ENCODE measurements at regions of chr14 and their contacts with region 1.

Region 1: GRCh38 chr14:102591889-102592763 is at the start of gene RCOR1:
- DNase-seq: peak; percentile 89
- ATAC-seq: peak; percentile 77
- H3K4me3 ChIP-seq: peak within 1 kb of the TSS; percentile 94 to 97 (median 94)
- H3K27ac ChIP-seq: peak within 1 kb of the TSS; percentile 99
- H3K4me1 ChIP-seq: peaks cover 48% of the 10 kb centered on the region
- H3K27me3 ChIP-seq: no peaks in the 10 kb centered on the region; a peak in 1 of 5 replicates
- CTCF ChIP-seq: no peak
- EP300 ChIP-seq: no peak
- POLR2A ChIP-seq: peak; percentile 85 to 94
- RAD21 ChIP-seq: peak; percentile 58; the same call in 1 of the 2 replicates
- total RNA-seq, gene RCOR1: 11.1 and 14.8 TPM in 2 replicates

Region 2: GRCh38 chr14:100803226-100803625 is 1788.9 kb before region 1 on chr14:
- CTCF ChIA-PET with region 1: no interaction called
- POLR2A ChIA-PET with region 1: no interaction called
- in situ Hi-C with region 1: no loop called
- intact Hi-C with region 1: no loop called
- DNase-seq: no peak
- ATAC-seq: no peak
- H3K4me3 ChIP-seq: no peak overlapping the region
- H3K27ac ChIP-seq: no peak overlapping the region
- H3K4me1 ChIP-seq: peaks cover 6% of the 10 kb centered on the region; the same call in 1 of the 2 replicates
- H3K27me3 ChIP-seq: no peaks in the 10 kb centered on the region
- CTCF ChIP-seq: no peak
- EP300 ChIP-seq: no peak
- POLR2A ChIP-seq: no peak
- RAD21 ChIP-seq: no peak

Region 3: DNA sequence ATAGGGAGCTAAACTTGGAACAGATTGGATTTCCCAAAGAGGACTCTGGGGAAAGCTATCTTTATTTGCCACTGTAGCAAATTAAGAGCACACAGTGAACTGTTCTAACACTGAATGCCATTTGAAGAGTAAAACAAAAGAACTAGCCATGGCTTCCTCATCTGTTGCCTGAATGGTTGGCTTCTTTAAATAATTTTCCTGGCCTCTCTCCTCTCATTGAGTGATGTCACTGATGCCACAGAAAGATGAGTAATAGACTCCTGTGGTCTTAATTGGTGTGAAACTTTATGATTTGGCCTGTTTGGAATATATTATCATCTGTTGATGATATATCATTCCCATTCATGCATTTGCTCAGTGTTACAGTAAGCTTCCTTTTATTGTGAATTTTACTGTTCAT is 409.9 kb before region 1 on chr14:
- CTCF ChIA-PET with region 1: no interaction called
- POLR2A ChIA-PET with region 1: no interaction called
- in situ Hi-C with region 1: no loop called
- intact Hi-C with region 1: no loop called
- DNase-seq: no peak
- ATAC-seq: no peak
- H3K4me3 ChIP-seq: no peak overlapping the region
- H3K27ac ChIP-seq: no peak overlapping the region
- H3K4me1 ChIP-seq: peaks cover 35% of the 10 kb centered on the region
- H3K27me3 ChIP-seq: no peaks in the 10 kb centered on the region
- CTCF ChIP-seq: no peak
- EP300 ChIP-seq: no peak
- POLR2A ChIP-seq: no peak
- RAD21 ChIP-seq: no peak

Region 4: DNA sequence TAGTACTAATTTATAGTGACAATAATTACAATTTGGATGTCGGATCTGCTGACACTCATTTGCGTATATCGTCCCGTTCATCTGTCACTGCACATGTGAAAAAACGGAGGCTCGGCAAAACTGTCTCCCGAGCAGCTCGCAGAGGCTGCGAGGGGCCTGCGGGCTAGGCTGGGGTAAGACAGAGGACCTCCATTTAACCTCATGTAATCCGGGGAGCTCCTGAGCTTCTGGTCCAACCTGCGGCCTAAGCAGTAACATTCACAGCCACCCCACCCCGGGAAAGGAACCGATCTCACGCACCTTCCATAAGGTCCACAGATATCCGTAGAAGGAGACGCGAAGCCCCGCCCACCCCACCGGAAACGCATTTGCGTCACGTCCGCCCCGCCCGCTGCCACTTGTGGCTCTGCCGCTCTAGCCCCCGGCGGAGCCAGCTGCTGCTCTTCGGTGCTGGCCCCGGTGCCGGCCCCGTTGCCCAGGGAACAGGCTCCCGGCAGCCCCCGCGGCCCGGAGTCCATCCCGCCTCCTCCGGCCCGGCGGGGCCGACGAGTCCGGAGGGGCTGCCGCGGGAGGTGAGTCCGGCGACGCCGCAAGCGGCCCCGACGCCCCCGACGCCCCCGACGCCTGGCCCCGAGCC is 229.5 kb before region 1 on chr14 and contains the starts of genes CINP and TECPR2:
- CTCF ChIA-PET with region 1: no interaction called
- POLR2A ChIA-PET with region 1: no interaction called
- in situ Hi-C with region 1: no loop called
- intact Hi-C with region 1: loop called (anchors 5 kb)
- DNase-seq: peak; percentile 85
- ATAC-seq: peak; percentile 99
- H3K4me3 ChIP-seq: peak within 1 kb of the TSS; percentile 83 to 92 (median 84)
- H3K27ac ChIP-seq: peak within 1 kb of the TSS; percentile 63
- H3K4me1 ChIP-seq: peaks cover 37% of the 10 kb centered on the region
- H3K27me3 ChIP-seq: no peaks in the 10 kb centered on the region; a peak in 1 of 5 replicates
- CTCF ChIP-seq: no peak
- EP300 ChIP-seq: no peak
- POLR2A ChIP-seq: peak; percentile 85 to 86
- RAD21 ChIP-seq: no peak
- total RNA-seq, gene CINP: 42.8 and 59.7 TPM in 2 replicates
- total RNA-seq, gene TECPR2: 5.7 and 13.6 TPM in 2 replicates

Region 5: DNA sequence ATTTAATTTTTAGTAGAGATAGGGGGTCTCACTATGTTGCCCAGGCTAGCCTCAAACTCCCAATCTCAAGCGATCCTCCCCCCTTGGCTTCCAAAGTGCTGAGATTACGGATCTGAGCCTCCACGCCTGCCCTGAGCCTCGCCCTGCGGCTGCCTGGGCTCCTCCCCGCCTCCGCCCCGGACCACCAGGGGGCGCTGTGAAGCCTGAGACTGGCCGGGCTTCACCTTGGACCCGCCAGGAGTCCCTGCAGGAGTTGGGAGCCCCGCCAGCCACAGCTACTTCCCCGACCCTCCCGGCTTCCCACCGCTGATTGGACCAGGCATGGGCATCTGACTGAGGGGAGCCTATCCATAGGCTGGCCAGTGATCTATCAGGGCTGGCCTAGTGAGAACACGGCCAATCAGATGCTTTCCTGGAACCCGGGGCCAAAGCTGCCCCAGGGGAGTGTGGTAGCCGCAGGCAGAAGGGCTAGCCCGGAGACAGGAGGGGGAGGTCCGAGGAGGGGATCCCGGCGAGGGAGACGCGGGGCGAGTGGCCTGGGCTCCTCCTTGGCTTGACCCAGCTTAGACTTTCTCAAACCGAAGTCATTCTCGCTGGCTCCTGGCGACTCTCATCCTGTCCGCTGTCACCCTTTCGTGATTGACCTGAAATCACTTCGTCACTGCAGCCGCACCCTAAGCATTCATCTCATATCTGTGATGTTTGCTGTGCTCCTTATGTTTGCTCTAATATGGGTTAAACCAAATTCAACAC is 67.5 kb before region 1 on chr14:
- CTCF ChIA-PET with region 1: interaction called, 9 read pairs
- POLR2A ChIA-PET with region 1: interaction called, 23 read pairs
- in situ Hi-C with region 1: no loop called
- intact Hi-C with region 1: loop called (anchors 1 kb)
- DNase-seq: peak; percentile 96
- ATAC-seq: peak; percentile 99
- H3K4me3 ChIP-seq: peak overlapping the region; percentile 72 to 81 (median 75)
- H3K27ac ChIP-seq: peak overlapping the region; percentile 57
- H3K4me1 ChIP-seq: peaks cover 38% of the 10 kb centered on the region
- H3K27me3 ChIP-seq: no peaks in the 10 kb centered on the region; a peak in 1 of 5 replicates
- CTCF ChIP-seq: peak; percentile 99
- EP300 ChIP-seq: no peak
- POLR2A ChIP-seq: peak; percentile 79 to 97
- RAD21 ChIP-seq: peak; percentile 98

Region 6: GRCh38 chr14:102545461-102546265 is 46.5 kb before region 1 on chr14:
- CTCF ChIA-PET with region 1: no interaction called
- POLR2A ChIA-PET with region 1: interaction called, 58 read pairs
- in situ Hi-C with region 1: loop called (anchors 5 kb)
- intact Hi-C with region 1: loop called (anchors 2 kb)
- DNase-seq: peak; percentile 63
- ATAC-seq: peak; percentile 52
- H3K4me3 ChIP-seq: peak overlapping the region; percentile 67 to 92 (median 82)
- H3K27ac ChIP-seq: peak overlapping the region; percentile 93
- H3K4me1 ChIP-seq: peaks cover 59% of the 10 kb centered on the region
- H3K27me3 ChIP-seq: no peaks in the 10 kb centered on the region; a peak in 1 of 5 replicates
- CTCF ChIP-seq: peak; percentile 49
- EP300 ChIP-seq: no peak; a peak in 1 of 4 replicates
- POLR2A ChIP-seq: peak in 1 of 2 experiments; percentile 58; a peak in 1 of 4 replicates
- RAD21 ChIP-seq: 0 out of 2 replicates have a peak, but pooled peaks have one; percentile 7

Region 7: DNA sequence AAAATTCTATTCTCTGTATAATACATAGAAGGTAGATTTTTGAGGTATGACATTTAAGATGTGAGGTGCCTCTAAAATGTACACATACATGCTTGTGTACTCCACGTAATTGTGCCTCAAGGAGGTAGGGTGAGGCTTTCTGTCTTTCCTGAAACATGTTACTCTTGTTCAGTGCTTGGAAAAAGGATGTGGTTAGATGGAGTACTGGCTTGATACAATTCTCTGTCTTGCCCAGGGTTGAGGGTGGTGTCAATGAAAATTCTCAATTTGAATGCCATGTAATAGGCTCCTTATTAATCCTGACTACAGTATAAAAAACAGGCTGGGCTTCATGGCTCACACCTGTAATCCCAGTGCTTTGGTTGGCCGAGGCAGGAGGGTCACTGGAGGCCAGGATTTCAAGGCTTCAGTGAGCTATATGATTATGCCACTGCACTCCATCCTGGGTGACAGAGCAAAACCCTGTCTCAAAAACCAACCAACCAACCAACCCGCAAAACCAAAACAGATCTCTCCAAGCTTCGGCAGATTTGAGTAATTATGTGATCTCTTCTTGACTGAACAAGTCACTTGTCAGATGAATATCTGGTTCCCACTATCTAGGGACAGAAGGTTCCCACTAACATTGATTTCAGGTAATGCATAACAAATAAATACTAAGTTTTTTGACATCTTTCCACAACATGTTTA is 41.9 kb after region 1 on chr14:
- CTCF ChIA-PET with region 1: no interaction called
- POLR2A ChIA-PET with region 1: no interaction called
- in situ Hi-C with region 1: no loop called
- intact Hi-C with region 1: no loop called
- DNase-seq: no peak
- ATAC-seq: no peak
- H3K4me3 ChIP-seq: no peak overlapping the region
- H3K27ac ChIP-seq: no peak overlapping the region
- H3K4me1 ChIP-seq: peaks cover 33% of the 10 kb centered on the region
- H3K27me3 ChIP-seq: no peaks in the 10 kb centered on the region
- CTCF ChIP-seq: no peak
- EP300 ChIP-seq: no peak
- POLR2A ChIP-seq: no peak
- RAD21 ChIP-seq: no peak

Region 8: DNA sequence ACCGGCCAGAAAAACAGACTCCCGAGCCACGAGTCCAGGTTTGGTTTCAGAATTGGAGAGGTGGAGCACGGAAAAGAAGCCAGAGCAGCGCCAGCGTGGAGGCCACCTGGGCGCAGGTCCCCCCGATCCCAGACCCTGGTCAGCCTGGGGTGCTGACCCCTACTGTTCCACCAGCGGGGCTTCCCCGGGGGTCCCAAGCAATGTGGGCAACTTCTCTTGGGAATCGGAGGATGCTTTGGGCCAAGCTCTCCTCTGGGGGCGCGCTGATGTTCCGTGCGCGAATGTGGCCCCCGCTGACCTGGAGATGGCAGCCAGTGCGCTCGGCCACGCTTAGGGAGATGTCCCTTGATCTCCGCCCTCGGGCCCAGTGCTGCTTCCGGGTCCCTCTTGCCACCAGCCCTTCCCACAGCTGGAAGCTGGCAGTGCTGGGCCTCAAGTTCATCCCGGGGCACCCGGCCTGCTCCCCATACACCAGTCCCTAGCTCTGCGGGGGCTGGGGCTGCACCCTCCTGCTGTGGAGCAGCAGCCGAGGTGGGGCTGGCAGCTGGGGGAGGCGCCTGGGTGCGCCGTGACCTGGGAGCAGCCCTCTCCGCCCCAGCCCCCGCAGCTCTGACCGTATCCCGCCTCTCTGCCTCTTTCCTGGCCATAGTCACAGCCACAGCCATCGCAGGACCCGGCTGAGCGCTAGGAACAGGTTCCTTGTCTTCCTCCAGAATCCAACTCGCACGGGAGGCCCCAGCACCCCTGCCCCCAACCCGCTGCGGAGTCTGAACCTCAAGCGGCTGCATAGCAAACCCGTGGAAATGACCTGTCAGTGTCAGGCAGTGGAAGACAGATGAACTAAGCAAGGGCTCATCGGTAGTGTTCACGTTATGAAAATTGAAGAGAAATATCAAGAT is 91.5 kb after region 1 on chr14:
- CTCF ChIA-PET with region 1: interaction called, 3 read pairs
- POLR2A ChIA-PET with region 1: interaction called, 5 read pairs
- in situ Hi-C with region 1: no loop called
- intact Hi-C with region 1: loop called (anchors 5 kb)
- DNase-seq: peak; percentile 61
- ATAC-seq: peak; percentile 95
- H3K4me3 ChIP-seq: peak overlapping the region; percentile 55 to 71 (median 60)
- H3K27ac ChIP-seq: peak overlapping the region; percentile 91
- H3K4me1 ChIP-seq: peaks cover 51% of the 10 kb centered on the region
- H3K27me3 ChIP-seq: no peaks in the 10 kb centered on the region
- CTCF ChIP-seq: peak; percentile 65
- EP300 ChIP-seq: no peak
- POLR2A ChIP-seq: peak; percentile 29 to 56; a peak in 3 of 4 replicates
- RAD21 ChIP-seq: no peak

Measured in HepG2 (cell line).